MCF 10A (cell line): ENCODE measurements at regions of chrX and their contacts with region 1.

Region 1: DNA sequence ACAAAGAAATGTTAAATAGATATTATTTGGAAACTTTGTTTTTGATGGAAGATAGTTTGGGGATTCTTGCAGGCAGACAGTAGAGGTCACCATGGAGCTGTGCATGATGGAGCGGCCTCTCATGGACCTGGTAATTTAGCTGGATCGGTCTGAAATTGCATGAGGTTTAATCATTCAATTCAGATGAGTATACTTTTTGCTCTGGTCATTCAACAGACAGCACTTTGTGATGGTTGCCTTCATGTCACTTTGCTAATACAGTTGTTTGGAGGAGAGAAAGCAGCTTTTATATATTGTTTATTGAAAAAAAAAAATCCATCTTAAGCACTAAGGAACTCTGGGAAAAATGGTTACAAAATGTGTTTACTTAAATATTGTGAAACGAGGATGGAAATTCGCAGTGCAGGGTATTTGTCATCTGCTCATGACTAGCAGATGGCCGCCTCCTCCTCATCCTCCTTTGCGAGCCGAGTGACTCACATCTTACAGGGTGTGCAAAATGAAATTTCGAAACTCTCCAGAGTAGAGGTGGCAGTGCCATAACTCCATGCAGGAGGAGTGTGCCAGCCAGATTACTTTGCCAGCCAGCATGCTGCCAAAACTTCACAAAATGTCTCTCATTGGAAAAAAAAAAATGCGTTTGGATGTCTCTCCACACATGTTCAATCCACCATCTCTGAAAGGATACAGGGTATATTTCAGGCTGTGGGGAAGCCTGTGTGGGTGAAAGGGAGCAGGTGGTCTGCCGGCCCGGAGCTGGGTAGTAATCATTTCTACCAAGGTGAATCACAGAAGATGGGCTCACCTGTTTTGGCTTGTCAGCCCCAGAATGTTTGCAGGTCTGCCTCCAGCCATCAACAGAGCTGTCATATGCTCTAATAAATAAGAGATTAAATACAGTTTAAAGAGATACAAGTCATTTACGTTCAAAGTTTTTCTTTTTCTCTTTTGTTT is 314.9 kb upstream of the DIPK2B start:
- DNase-seq: peak; percentile 98
- H3K4me3 Mint-ChIP-seq: peak overlapping the region; percentile 64
- H3K27ac Mint-ChIP-seq: peak overlapping the region; percentile 14
- H3K4me1 Mint-ChIP-seq: peaks cover 27% of the 10 kb centered on the region
- H3K27me3 Mint-ChIP-seq: peaks cover 18% of the 10 kb centered on the region
- CTCF ChIP-seq: peak; percentile 70

Region 2: DNA sequence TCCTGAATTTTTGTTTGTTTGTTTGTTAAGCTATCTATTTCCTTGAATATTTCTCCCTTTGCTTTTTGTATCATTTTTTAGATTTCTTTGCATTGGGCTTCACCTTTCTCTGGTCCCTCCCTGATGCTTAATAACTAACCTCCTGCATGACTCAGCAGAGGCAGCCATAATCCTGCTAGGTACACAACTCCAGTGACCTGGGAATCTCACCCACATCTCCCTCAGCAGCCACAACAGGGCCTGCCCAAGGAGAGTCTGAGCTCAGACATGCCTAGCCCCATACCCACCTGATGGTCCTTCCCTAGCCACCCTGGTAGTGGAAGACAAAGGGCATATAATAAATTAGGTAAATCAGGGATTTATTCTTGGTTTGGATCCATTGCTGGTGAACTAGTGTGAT is 45.2 kb before region 1 on chrX:
- CTCF ChIA-PET with region 1: no interaction called
- POLR2A ChIA-PET with region 1: no interaction called
- intact Hi-C with region 1: no loop called
- DNase-seq: no peak
- H3K4me3 Mint-ChIP-seq: no peak overlapping the region
- H3K27ac Mint-ChIP-seq: no peak overlapping the region
- H3K4me1 Mint-ChIP-seq: no peaks in the 10 kb centered on the region
- H3K27me3 Mint-ChIP-seq: peaks cover 49% of the 10 kb centered on the region
- CTCF ChIP-seq: no peak

Region 3: GRCh38 chrX:45505214-45505613 is 10.3 kb before region 1 on chrX:
- CTCF ChIA-PET with region 1: no interaction called
- POLR2A ChIA-PET with region 1: interaction called, 11 read pairs
- intact Hi-C with region 1: no loop called
- DNase-seq: peak; percentile 51
- H3K4me3 Mint-ChIP-seq: no peak overlapping the region
- H3K27ac Mint-ChIP-seq: peak overlapping the region; percentile 69
- H3K4me1 Mint-ChIP-seq: peaks cover 19% of the 10 kb centered on the region
- H3K27me3 Mint-ChIP-seq: peaks cover 11% of the 10 kb centered on the region
- CTCF ChIP-seq: no peak

Region 4: DNA sequence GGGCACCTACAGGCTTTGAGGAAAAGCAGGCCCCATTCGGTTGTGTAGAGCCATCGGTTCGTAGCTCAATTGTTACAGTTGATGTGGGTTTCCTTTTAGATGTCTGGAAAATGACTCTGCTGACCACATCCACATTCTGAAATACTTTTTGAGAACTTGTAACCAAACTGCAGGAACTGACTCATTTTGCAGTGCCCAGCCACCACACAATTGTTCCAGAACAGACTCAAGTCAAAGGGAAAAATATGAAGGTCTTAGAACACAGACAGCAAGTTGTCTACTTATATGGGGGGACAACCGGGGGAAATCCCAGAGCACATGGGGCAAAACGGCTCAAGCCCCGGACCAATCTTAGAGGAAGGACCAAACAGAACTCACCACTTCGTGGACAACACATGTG is 242.8 kb after region 1 on chrX:
- CTCF ChIA-PET with region 1: no interaction called
- POLR2A ChIA-PET with region 1: interaction called, 11 read pairs
- intact Hi-C with region 1: no loop called
- DNase-seq: peak; percentile 68
- H3K4me3 Mint-ChIP-seq: peak overlapping the region; percentile 45
- H3K27ac Mint-ChIP-seq: peak overlapping the region; percentile 77
- H3K4me1 Mint-ChIP-seq: peaks cover 35% of the 10 kb centered on the region
- H3K27me3 Mint-ChIP-seq: peaks cover 25% of the 10 kb centered on the region
- CTCF ChIP-seq: no peak

Region 5: GRCh38 chrX:45806410-45807121 is 291.0 kb after region 1 on chrX:
- CTCF ChIA-PET with region 1: no interaction called
- POLR2A ChIA-PET with region 1: interaction called, 11 read pairs
- intact Hi-C with region 1: loop called (anchors 1 kb)
- DNase-seq: peak; percentile 24
- H3K4me3 Mint-ChIP-seq: peak overlapping the region; percentile 66
- H3K27ac Mint-ChIP-seq: peak overlapping the region; percentile 89
- H3K4me1 Mint-ChIP-seq: peaks cover 19% of the 10 kb centered on the region
- H3K27me3 Mint-ChIP-seq: peaks cover 58% of the 10 kb centered on the region
- CTCF ChIP-seq: no peak

Region 6: DNA sequence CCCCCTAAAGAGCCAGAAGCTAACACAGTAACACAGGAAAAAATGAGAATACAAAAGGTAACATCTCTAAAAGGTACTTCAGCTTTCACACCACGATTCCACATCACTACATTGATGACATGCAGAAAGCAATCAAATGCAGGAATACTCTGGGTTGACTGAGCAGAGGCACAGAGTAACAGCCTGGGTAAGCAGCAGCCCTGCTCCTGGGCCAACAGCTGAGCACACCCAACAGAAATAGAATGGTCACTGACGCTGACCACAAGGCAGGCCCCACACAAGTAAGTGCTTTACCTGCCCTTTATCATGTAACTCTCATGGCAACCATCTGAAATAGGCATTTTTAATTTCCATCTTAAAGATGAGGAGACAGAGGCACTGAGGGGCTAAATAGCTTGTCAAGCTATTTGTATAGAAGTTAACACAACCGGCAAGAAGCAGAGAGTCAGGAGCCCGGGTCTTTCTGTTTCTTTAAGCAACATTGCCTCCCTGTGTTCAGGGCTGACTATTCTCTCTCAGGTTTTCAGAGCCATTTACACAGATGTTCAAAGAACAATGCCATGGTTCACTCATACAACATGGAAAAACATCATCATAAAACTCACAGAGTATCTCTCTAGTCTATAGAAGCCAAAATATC is 860.8 kb after region 1 on chrX:
- CTCF ChIA-PET with region 1: interaction called, 7 read pairs
- POLR2A ChIA-PET with region 1: interaction called, 11 read pairs
- intact Hi-C with region 1: loop called (anchors 1 kb)
- DNase-seq: peak; percentile 55
- H3K4me3 Mint-ChIP-seq: no peak overlapping the region
- H3K27ac Mint-ChIP-seq: no peak overlapping the region
- H3K4me1 Mint-ChIP-seq: no peaks in the 10 kb centered on the region
- H3K27me3 Mint-ChIP-seq: peaks cover 77% of the 10 kb centered on the region
- CTCF ChIP-seq: peak; percentile 44